Mammary epithelial cell (primary cell): ENCODE measurements at regions of chr15 and their contacts with region 1.

Region 1: GRCh38 chr15:64731012-64731806 is 44.2 kb downstream of the RBPMS2 start:
- DNase-seq: peak; percentile 72
- H3K4me3 ChIP-seq: no peak overlapping the region
- H3K27ac ChIP-seq: no peak overlapping the region
- H3K4me1 ChIP-seq: no peaks in the 10 kb centered on the region
- H3K27me3 ChIP-seq: no peaks in the 10 kb centered on the region
- CTCF ChIP-seq: peak; percentile 80 to 91

Region 2: DNA sequence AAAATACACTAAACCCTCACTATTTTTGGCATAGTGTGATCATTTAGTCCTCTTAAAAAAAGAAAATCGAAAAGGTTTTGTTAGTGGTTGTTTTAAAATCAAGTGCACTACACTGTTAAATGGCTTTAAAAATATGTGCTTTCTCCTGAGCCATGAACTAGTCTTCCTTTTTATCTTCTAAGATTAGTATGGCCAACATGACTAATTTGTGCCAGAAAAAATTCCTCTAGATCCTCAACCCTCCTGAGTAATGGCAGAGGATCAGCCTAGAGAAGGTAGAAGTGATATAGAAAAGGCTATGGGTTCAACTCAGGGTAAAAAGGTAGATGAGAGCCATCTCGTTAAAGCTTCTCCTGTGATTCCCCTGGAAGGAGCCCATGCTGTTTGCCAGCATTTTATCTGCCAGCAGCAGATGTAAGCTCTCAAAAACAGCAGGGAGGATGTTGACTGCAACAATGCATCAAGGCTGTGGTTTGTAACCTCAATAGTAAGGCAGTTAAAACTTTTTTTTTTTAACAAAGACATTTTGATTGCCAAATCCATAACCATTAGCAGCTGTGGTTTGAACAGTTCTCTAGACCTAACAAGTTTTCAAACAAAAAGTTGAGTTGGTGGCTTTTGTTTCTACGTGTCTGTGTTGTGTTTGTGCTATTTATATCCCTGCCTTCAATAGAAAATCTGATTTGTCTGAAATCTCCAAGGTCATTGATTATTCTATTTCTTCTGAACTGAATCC is 301.0 kb before region 1 on chr15:
- CTCF ChIA-PET with region 1: no interaction called
- dilution Hi-C with region 1: no loop called
- in situ Hi-C with region 1: no loop called
- intact Hi-C with region 1: loop called (anchors 1 kb)
- DNase-seq: peak; percentile 80
- H3K4me3 ChIP-seq: no peak overlapping the region
- H3K27ac ChIP-seq: no peak overlapping the region
- H3K4me1 ChIP-seq: peaks cover 13% of the 10 kb centered on the region
- H3K27me3 ChIP-seq: no peaks in the 10 kb centered on the region
- CTCF ChIP-seq: no peak

Region 3: DNA sequence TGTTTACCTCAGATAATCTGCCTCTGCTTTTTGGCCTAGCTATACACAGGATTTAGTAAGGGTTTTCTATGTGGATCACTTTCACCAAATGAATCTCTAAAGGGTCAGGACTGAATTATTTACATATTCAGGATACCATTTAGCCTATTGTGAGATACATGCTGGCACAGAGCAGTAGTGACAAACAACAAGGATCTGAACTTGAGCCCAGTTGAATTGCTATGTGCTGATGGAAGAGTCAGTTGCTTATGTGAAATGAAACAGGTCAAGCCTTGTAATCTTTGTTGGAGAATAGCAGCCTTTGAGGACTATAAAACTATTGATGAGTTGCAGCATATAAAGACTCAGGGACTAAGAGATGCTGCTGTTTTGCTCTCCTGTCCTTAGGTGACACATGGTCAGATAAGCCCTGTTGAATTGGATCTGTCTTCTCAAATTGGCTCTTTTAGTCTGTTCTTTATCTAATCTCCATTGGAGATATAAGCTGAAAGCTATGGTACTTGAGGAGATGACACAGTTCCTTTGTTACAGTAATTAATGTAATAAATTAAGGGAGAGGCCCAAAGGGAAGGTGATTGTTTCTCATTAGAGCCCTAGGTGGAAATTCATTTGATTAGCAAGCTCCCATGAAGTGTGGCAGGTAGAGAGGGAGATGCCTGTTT is 240.5 kb before region 1 on chr15:
- CTCF ChIA-PET with region 1: no interaction called
- dilution Hi-C with region 1: no loop called
- in situ Hi-C with region 1: no loop called
- intact Hi-C with region 1: no loop called
- DNase-seq: no peak
- H3K4me3 ChIP-seq: no peak overlapping the region
- H3K27ac ChIP-seq: no peak overlapping the region
- H3K4me1 ChIP-seq: no peaks in the 10 kb centered on the region
- H3K27me3 ChIP-seq: no peaks in the 10 kb centered on the region
- CTCF ChIP-seq: no peak

Region 4: GRCh38 chr15:64521726-64522164 is 209.5 kb before region 1 on chr15:
- CTCF ChIA-PET with region 1: no interaction called
- dilution Hi-C with region 1: no loop called
- in situ Hi-C with region 1: no loop called
- intact Hi-C with region 1: no loop called
- DNase-seq: peak; percentile 93
- H3K4me3 ChIP-seq: peak overlapping the region in 2 of 3 experiments; percentile 5 to 12
- H3K27ac ChIP-seq: peak overlapping the region; percentile 59
- H3K4me1 ChIP-seq: peaks cover 55% of the 10 kb centered on the region
- H3K27me3 ChIP-seq: no peaks in the 10 kb centered on the region
- CTCF ChIP-seq: no peak

Region 5: DNA sequence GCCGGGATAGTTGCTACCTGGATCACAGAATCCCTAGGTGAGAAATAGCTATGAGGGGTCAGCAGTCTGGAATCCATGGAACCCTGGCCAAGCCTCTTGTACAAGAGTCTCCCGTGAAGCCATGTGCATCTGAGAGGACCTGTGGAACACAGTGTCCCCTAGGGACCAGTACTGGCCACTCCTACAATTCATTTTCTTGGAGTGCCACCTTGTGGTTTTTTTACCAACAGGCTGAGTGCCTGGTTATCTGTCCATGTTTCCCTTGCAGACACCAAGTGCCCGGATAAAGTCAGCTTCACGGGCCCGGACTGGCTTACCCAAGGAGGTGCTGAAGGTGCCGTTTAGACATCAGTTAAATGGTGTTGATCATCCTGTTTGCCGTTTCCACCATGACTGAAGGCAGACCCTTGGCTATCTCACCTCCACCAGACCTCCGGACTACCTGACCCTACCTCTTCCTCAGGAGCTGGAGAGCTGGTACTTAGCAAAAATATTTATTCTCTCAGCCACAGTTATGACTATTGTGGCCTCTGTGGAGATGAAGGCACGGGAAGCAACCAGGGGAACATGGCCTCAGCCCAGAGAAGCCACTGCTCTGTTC is 49.7 kb before region 1 on chr15:
- CTCF ChIA-PET with region 1: interaction called, 3 read pairs
- dilution Hi-C with region 1: no loop called
- in situ Hi-C with region 1: loop called in 1 of 2 experiments (anchors 5 kb)
- intact Hi-C with region 1: loop called (anchors 1 kb)
- DNase-seq: peak; percentile 53
- H3K4me3 ChIP-seq: no peak overlapping the region
- H3K27ac ChIP-seq: no peak overlapping the region
- H3K4me1 ChIP-seq: no peaks in the 10 kb centered on the region
- H3K27me3 ChIP-seq: no peaks in the 10 kb centered on the region
- CTCF ChIP-seq: peak; percentile 58 to 86

Region 6: DNA sequence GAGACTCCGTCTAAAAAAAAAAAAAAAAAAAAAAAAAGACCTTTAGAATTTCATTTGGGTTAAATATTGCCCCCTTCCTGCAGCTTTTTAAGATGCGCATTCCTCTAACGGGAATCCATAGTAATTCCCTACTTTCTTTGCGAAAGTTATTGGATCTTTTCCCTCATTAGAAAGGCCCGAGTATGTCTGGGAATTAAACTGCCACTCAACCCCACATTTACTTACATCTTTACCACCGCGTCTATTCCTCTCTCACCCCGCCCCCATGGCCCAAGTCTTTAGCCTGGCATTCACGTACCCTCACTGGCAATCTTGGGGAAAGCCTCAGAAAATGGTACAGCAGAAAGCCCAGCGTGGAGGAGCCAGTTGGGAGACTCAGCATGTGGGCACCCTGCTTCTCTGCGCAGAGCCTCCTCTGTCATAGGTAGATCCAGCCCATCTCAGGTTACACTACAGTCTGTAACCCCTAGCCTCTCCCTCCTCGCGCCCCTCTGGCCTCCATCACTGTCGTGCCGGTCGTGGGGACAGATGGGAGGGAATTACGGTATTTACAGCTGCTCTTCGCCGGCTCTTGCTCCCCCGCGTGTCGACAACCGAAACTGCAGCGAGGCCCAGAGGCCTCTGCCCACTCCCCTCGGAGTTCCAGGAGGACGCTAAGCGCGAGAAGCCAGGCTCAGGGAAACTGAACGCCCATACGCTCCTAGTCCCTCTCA is 174.1 kb after region 1 on chr15:
- CTCF ChIA-PET with region 1: no interaction called
- dilution Hi-C with region 1: no loop called
- in situ Hi-C with region 1: loop called (anchors 10 kb)
- intact Hi-C with region 1: loop called (anchors 1 kb)
- DNase-seq: no peak
- H3K4me3 ChIP-seq: no peak overlapping the region
- H3K27ac ChIP-seq: no peak overlapping the region
- H3K4me1 ChIP-seq: no peaks in the 10 kb centered on the region
- H3K27me3 ChIP-seq: no peaks in the 10 kb centered on the region
- CTCF ChIP-seq: peak; percentile 59 to 68

Region 7: DNA sequence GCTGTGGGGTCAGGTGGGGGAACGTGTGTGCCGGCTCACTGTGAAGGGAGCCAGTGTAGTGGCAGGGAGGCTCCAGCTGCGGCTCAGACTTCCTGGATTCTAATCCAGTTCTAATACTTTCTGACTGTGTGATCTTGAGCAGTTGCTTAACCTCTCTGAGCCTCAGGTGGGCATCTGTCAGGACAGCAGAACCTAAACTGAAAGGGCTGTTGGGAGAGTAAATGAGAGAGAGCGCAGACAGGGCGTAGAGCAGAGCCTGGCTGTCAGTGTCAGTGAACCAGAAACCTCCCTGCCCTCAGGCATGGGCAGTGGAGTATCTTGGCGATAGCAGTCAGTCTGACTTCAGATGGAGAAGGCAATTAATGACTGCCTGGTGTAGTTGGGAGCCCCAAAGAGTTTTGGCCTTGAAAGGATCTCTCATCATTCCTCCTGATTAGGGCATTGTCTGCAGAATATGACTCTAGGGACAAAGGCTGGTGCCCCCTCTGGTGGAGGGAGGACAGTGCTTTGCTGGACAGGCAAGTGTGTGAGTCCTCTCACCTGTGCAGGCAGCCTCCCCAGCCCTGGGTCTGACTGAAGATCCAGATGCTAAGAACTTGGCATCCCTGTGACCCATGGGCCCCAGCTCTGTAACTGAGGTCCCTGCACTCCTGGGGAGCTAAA is 354.9 kb after region 1 on chr15:
- CTCF ChIA-PET with region 1: no interaction called
- dilution Hi-C with region 1: no loop called
- in situ Hi-C with region 1: no loop called
- intact Hi-C with region 1: loop called (anchors 5 kb)
- DNase-seq: peak; percentile 44
- H3K4me3 ChIP-seq: no peak overlapping the region
- H3K27ac ChIP-seq: no peak overlapping the region
- H3K4me1 ChIP-seq: peaks cover 37% of the 10 kb centered on the region
- H3K27me3 ChIP-seq: no peaks in the 10 kb centered on the region
- CTCF ChIP-seq: peak; percentile 64 to 69